Endothelial cell of umbilical vein (primary cell): ENCODE measurements at regions of chr4 and their contacts with region 1.

Region 1: GRCh38 chr4:25144870-25145481 is 15.3 kb downstream of the SEPSECS start:
- DNase-seq: peak; percentile 61
- H3K4me3 ChIP-seq: no peak overlapping the region
- H3K27ac ChIP-seq: no peak overlapping the region
- H3K4me1 ChIP-seq: no peaks in the 10 kb centered on the region
- H3K27me3 ChIP-seq: no peaks in the 10 kb centered on the region
- CTCF ChIP-seq: peak; percentile 37 to 49
- POLR2A ChIP-seq: no peak

Region 2: GRCh38 chr4:24488399-24489164 is 656.4 kb before region 1 on chr4:
- CTCF ChIA-PET with region 1: interaction called, 9 read pairs
- POLR2A ChIA-PET with region 1: no interaction called
- dilution Hi-C with region 1: no loop called
- intact Hi-C with region 1: loop called (anchors 1 kb)
- DNase-seq: peak; percentile 67
- H3K4me3 ChIP-seq: no peak overlapping the region
- H3K27ac ChIP-seq: no peak overlapping the region
- H3K4me1 ChIP-seq: no peaks in the 10 kb centered on the region
- H3K27me3 ChIP-seq: peaks cover 6 to 9% of the 10 kb centered on the region in 2 experiments
- CTCF ChIP-seq: peak; percentile 88 to 90
- POLR2A ChIP-seq: no peak

Region 3: GRCh38 chr4:25117274-25117673 is 27.7 kb before region 1 on chr4:
- CTCF ChIA-PET with region 1: interaction called, 10 read pairs
- POLR2A ChIA-PET with region 1: no interaction called
- dilution Hi-C with region 1: no loop called
- intact Hi-C with region 1: no loop called
- DNase-seq: no peak
- H3K4me3 ChIP-seq: no peak overlapping the region
- H3K27ac ChIP-seq: no peak overlapping the region
- H3K4me1 ChIP-seq: no peaks in the 10 kb centered on the region
- H3K27me3 ChIP-seq: no peaks in the 10 kb centered on the region
- CTCF ChIP-seq: no peak
- POLR2A ChIP-seq: no peak

Region 4: GRCh38 chr4:25131926-25132325 is 13.1 kb before region 1 on chr4:
- CTCF ChIA-PET with region 1: interaction called, 21 read pairs
- POLR2A ChIA-PET with region 1: no interaction called
- dilution Hi-C with region 1: no loop called
- intact Hi-C with region 1: no loop called
- DNase-seq: no peak
- H3K4me3 ChIP-seq: no peak overlapping the region
- H3K27ac ChIP-seq: no peak overlapping the region
- H3K4me1 ChIP-seq: no peaks in the 10 kb centered on the region
- H3K27me3 ChIP-seq: no peaks in the 10 kb centered on the region
- CTCF ChIP-seq: no peak
- POLR2A ChIP-seq: no peak

Region 5: DNA sequence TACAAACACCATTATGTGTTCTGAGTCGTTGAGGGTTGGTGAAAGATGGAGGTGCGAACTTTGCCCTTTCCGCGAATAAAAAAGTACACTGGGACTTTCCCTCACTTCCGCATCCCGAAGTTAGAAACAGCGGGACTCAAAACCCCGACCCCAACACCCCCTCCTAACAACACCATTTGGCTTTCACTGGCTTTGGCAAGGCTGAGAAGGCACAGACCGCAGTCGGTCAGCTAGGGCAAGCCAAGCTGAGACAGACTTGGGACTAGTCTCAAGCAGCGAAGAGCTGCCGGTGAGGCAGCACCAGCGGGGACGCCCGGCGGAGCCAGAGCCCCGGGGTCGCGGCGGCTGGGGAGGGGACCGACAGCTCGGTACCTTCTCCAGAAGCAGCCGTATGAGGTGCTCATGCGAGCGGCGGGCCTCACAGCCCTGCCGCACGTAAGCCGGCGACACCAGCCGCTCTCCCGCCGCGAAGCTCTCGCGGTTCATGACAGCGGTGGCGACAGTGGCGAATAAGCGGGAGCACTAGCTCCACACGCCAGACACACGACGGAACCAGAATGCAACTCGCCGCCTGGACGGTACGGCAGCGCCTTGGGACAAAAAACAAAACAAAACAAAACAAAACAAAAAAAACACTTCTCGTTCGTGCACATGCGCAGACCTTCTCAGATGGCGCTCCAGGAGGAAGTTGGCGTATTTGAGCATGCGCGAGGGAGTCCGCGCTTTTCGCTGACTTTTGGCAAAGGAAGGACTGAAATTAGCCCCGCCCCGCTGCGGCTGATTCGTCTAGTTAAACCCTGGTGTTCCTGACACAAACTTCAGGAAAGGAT is 15.1 kb after region 1 on chr4 and contains the start of gene SEPSECS:
- CTCF ChIA-PET with region 1: interaction called, 17 read pairs
- POLR2A ChIA-PET with region 1: no interaction called
- dilution Hi-C with region 1: no loop called
- intact Hi-C with region 1: no loop called
- DNase-seq: peak; percentile 99
- H3K4me3 ChIP-seq: peak within 1 kb of the TSS; percentile 39 to 94 (median 84)
- H3K27ac ChIP-seq: peak within 1 kb of the TSS; percentile 81
- H3K4me1 ChIP-seq: peaks cover 7% of the 10 kb centered on the region
- H3K27me3 ChIP-seq: no peaks in the 10 kb centered on the region
- CTCF ChIP-seq: no peak
- POLR2A ChIP-seq: peak; percentile 87
- total RNA-seq, gene SEPSECS: 5.8 and 8.3 TPM in 2 replicates

Region 6: DNA sequence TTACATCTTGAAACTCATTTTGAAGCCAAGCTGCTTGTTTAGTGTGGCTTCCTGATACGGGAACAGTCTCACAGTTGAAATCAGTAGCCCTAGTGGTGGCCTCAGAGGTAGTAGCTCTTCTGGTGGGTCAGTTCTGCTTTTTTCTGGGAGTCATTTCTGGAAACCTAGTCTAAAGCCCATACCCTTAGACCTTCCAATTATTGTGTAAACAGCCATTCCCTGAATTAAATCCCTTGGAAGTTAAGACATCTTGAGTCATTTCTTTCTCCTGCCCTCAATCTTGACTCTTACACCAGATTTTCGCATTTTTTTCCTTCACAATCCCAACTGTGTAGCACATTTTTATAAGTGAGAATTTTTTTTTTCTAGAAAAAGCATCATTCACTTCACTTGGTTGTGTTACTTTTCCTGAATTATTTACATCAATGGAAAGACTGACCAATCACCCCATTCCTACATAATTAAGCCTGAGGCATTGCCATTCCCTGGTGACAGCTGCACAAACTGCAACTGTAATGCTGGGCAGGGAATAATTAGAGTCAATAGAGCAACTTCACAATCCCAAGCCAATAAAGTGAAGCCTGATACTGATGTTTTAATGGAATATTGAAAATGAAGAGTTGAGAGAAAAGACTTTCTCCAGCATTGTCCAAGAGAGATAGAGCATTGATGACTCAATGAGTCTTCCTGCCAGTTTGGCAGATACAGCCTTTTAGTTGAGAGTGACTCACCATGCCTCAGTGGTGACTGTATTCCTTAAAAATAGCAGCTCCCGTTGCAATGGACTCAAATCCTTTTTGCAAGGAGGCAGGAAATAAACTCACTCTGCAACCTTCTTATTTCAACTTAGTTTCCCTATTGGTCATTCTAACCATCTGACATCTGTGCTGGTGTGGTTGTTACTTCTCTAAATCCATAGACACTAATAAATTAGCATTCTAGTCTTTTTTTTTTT is 28.3 kb after region 1 on chr4:
- CTCF ChIA-PET with region 1: interaction called, 12 read pairs
- POLR2A ChIA-PET with region 1: no interaction called
- dilution Hi-C with region 1: no loop called
- intact Hi-C with region 1: no loop called
- DNase-seq: peak; percentile 91
- H3K4me3 ChIP-seq: no peak overlapping the region
- H3K27ac ChIP-seq: peak overlapping the region; percentile 41
- H3K4me1 ChIP-seq: peaks cover 16% of the 10 kb centered on the region
- H3K27me3 ChIP-seq: no peaks in the 10 kb centered on the region
- CTCF ChIP-seq: no peak
- POLR2A ChIP-seq: no peak